Caco-2 (cell line): ENCODE measurements at regions of chr3 and their contacts with region 1.

Region 1: DNA sequence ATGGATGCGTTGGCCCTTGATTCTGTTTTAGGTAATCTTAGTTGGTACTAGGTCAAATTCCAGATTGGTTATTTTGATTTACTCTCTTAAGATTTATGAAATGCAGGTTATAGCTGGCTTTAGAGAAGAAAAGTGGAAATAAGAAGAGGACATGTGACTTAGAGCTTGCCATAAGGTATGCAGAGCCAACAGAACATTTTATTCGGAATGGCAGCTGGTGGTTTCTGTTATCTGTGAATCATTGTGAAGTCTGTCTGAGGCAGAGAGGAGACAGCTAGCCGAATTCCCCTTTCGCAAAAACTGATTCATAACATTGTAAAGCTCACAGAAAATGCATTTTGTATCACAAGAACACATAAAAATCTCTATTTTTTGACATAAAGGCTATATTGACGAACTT is 82.1 kb downstream of the FILIP1L start:
- DNase-seq: no peak
- H3K4me3 ChIP-seq: no peak overlapping the region
- H3K4me3 Mint-ChIP-seq: no peak overlapping the region
- H3K27ac Mint-ChIP-seq: no peak overlapping the region
- H3K4me1 ChIP-seq: peaks cover 94% of the 10 kb centered on the region
- H3K4me1 Mint-ChIP-seq: peaks cover 34% of the 10 kb centered on the region
- H3K27me3 ChIP-seq: no peaks in the 10 kb centered on the region
- H3K27me3 Mint-ChIP-seq: no peaks in the 10 kb centered on the region
- CTCF ChIP-seq: no peak

Region 2: DNA sequence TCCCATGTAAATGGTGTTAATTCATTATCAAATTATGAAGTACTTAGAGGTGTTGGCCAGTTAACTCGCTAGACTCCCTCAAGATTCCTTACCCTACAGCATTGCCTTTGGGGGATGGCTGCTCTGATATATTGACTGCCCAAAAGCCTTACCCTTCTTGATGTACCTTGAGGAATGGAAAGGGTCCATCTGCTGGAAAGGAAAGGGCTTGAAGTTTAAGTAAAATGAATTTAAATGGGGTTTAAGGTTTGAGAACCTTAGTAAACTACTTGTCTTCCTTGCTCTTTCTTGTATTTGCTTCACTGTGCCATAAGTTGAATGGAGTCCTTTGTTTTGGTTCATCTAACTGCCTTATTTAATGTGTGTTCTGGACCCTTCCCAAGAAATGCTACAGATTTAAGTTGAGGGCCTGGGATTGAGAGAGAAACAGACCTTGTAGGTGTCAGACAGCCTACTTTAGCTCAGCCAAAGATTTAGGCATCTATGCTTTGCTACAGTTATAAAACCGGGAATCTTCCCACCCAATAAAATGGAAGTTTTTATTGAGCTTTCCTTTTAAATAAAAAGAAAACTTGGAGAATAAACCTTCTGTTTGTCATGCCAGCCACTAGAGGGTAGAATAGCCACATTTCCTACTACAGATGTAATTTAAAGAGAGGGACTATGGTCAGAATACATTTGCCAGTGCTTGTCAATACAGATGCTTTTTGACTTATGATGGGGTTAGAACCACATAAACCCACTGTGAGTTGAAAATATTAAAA is 189.2 kb before region 1 on chr3:
- CTCF ChIA-PET with region 1: no interaction called
- POLR2A ChIA-PET with region 1: no interaction called
- intact Hi-C with region 1: loop called (anchors 1 kb)
- DNase-seq: peak in 1 of 2 experiments; percentile 33
- H3K4me3 ChIP-seq: no peak overlapping the region
- H3K4me3 Mint-ChIP-seq: no peak overlapping the region
- H3K27ac Mint-ChIP-seq: no peak overlapping the region
- H3K4me1 ChIP-seq: peaks cover 12% of the 10 kb centered on the region; the same call in 1 of the 2 replicates
- H3K4me1 Mint-ChIP-seq: peaks cover 6% of the 10 kb centered on the region
- H3K27me3 ChIP-seq: no peaks in the 10 kb centered on the region
- H3K27me3 Mint-ChIP-seq: no peaks in the 10 kb centered on the region
- CTCF ChIP-seq: peak; percentile 63 to 67

Region 3: DNA sequence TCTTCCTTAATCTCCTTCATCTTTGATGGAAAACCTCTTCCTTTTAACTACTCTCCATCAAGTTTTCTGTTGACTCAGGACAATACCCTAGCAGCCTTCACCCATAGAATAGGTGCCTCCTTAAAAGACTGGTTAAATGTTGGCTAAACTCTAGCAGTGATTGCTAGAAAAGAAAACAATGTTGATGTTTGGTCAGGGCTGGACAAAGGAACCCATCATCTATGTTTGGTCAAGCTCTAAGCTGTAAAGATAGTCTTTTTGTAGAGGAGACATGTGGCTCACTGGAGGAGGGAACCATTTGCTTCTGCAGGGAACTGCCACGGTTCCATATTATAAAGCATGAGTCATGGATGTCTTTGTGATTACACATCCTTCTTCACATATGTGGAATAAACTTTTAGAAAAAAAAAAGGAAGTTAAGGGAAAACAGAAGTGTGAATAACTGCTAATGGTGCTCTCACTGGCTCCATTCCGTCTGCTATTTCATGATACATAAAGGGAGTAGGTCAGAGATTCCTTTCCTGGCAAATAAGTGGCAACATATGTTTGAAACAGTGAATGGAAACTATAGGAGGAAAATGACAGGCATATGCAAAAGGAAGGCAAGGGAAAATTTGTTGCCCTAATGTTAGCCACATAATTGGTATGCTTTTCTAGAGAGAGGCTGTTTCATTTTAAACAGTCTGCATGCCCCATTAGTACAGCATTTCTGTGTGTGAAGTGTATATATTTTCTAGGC is 136.4 kb before region 1 on chr3:
- CTCF ChIA-PET with region 1: no interaction called
- POLR2A ChIA-PET with region 1: no interaction called
- intact Hi-C with region 1: loop called (anchors 1 kb)
- DNase-seq: peak; percentile 52 to 66
- H3K4me3 ChIP-seq: no peak overlapping the region
- H3K4me3 Mint-ChIP-seq: peak overlapping the region; percentile 42
- H3K27ac Mint-ChIP-seq: peak overlapping the region; percentile 89
- H3K4me1 ChIP-seq: peaks cover 38% of the 10 kb centered on the region
- H3K4me1 Mint-ChIP-seq: peaks cover 20% of the 10 kb centered on the region
- H3K27me3 ChIP-seq: no peaks in the 10 kb centered on the region
- H3K27me3 Mint-ChIP-seq: no peaks in the 10 kb centered on the region
- CTCF ChIP-seq: no peak

Region 4: GRCh38 chr3:99965077-99965476 is 67.2 kb before region 1 on chr3:
- CTCF ChIA-PET with region 1: no interaction called
- POLR2A ChIA-PET with region 1: no interaction called
- intact Hi-C with region 1: loop called (anchors 5 kb)
- DNase-seq: no peak
- H3K4me3 ChIP-seq: no peak overlapping the region
- H3K4me3 Mint-ChIP-seq: no peak overlapping the region
- H3K27ac Mint-ChIP-seq: peak overlapping the region; percentile 24
- H3K4me1 ChIP-seq: peaks cover 23% of the 10 kb centered on the region
- H3K4me1 Mint-ChIP-seq: peaks cover 49% of the 10 kb centered on the region
- H3K27me3 ChIP-seq: no peaks in the 10 kb centered on the region
- H3K27me3 Mint-ChIP-seq: no peaks in the 10 kb centered on the region
- CTCF ChIP-seq: no peak

Region 5: DNA sequence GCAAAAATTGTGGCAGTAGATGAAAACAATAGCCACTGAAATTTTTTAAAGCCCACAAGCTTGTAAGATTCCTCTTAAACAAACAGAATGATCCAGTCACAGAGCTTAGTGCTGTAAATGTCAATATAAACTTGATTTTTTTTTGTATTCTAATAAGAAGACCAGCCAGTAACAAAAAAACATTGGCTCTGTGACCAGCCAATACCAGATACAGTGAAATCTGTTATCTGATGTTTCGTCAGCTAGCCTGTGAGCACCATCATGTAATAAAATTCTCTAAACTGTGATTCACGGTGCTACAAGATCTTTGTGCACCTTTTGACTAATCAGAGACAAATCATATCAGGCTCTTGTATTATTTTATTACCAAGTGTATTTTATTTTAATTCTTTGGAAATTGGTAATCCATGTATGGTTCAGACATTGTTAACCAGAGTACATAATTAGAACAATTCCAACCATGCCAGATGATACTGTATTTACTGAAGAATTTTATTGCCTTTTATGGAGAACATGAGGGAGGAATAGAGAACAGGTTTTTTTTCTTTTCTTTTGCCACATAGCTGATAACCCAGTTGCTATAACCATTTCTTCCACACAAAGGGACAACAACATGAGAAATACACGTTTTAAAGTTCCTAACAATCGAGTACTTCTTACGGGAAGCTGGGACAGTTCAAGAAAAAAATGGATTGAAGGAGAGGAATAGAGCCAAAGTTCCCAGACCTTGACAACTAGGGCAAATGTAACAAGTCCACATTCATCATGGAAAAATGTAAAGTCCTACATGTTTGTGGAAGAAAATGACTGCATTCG is 10.1 kb after region 1 on chr3:
- CTCF ChIA-PET with region 1: interaction called, 3 read pairs
- POLR2A ChIA-PET with region 1: no interaction called
- intact Hi-C with region 1: loop called (anchors 1 kb)
- DNase-seq: peak in 1 of 2 experiments; percentile 23
- H3K4me3 ChIP-seq: no peak overlapping the region
- H3K4me3 Mint-ChIP-seq: no peak overlapping the region
- H3K27ac Mint-ChIP-seq: peak overlapping the region; percentile 87
- H3K4me1 ChIP-seq: peaks cover 78% of the 10 kb centered on the region
- H3K4me1 Mint-ChIP-seq: peaks cover 47% of the 10 kb centered on the region
- H3K27me3 ChIP-seq: no peaks in the 10 kb centered on the region
- H3K27me3 Mint-ChIP-seq: no peaks in the 10 kb centered on the region
- CTCF ChIP-seq: no peak

Region 6: GRCh38 chr3:100053951-100054620 is 21.8 kb after region 1 on chr3:
- CTCF ChIA-PET with region 1: interaction called, 3 read pairs
- POLR2A ChIA-PET with region 1: no interaction called
- intact Hi-C with region 1: loop called (anchors 1 kb)
- DNase-seq: peak; percentile 70 to 73
- H3K4me3 ChIP-seq: no peak overlapping the region
- H3K4me3 Mint-ChIP-seq: peak overlapping the region; percentile 48
- H3K27ac Mint-ChIP-seq: peak overlapping the region; percentile 83
- H3K4me1 ChIP-seq: peaks cover 56% of the 10 kb centered on the region
- H3K4me1 Mint-ChIP-seq: peaks cover 51% of the 10 kb centered on the region
- H3K27me3 ChIP-seq: no peaks in the 10 kb centered on the region
- H3K27me3 Mint-ChIP-seq: no peaks in the 10 kb centered on the region
- CTCF ChIP-seq: no peak

Region 7: GRCh38 chr3:100068826-100069225 is 36.6 kb after region 1 on chr3:
- CTCF ChIA-PET with region 1: no interaction called
- POLR2A ChIA-PET with region 1: no interaction called
- intact Hi-C with region 1: no loop called
- DNase-seq: peak; percentile 70 to 80
- H3K4me3 ChIP-seq: no peak overlapping the region
- H3K4me3 Mint-ChIP-seq: no peak overlapping the region
- H3K27ac Mint-ChIP-seq: no peak overlapping the region
- H3K4me1 ChIP-seq: peaks cover 21% of the 10 kb centered on the region
- H3K4me1 Mint-ChIP-seq: peaks cover 6% of the 10 kb centered on the region
- H3K27me3 ChIP-seq: no peaks in the 10 kb centered on the region
- H3K27me3 Mint-ChIP-seq: no peaks in the 10 kb centered on the region
- CTCF ChIP-seq: peak; percentile 50 to 63

Region 8: GRCh38 chr3:100081986-100082692 is 49.9 kb after region 1 on chr3:
- CTCF ChIA-PET with region 1: no interaction called
- POLR2A ChIA-PET with region 1: interaction called, 4 read pairs
- intact Hi-C with region 1: loop called (anchors 1 kb)
- DNase-seq: no peak
- H3K4me3 ChIP-seq: no peak overlapping the region
- H3K4me3 Mint-ChIP-seq: no peak overlapping the region
- H3K27ac Mint-ChIP-seq: no peak overlapping the region
- H3K4me1 ChIP-seq: peaks cover 59% of the 10 kb centered on the region
- H3K4me1 Mint-ChIP-seq: peaks cover 40% of the 10 kb centered on the region
- H3K27me3 ChIP-seq: no peaks in the 10 kb centered on the region
- H3K27me3 Mint-ChIP-seq: no peaks in the 10 kb centered on the region
- CTCF ChIP-seq: no peak

Region 9: GRCh38 chr3:100106531-100107141 is 74.4 kb after region 1 on chr3:
- CTCF ChIA-PET with region 1: no interaction called
- POLR2A ChIA-PET with region 1: no interaction called
- intact Hi-C with region 1: no loop called
- DNase-seq: no peak
- H3K4me3 ChIP-seq: no peak overlapping the region
- H3K4me3 Mint-ChIP-seq: no peak overlapping the region
- H3K27ac Mint-ChIP-seq: no peak overlapping the region
- H3K4me1 ChIP-seq: 0 out of 2 replicates have a peak, but pooled peaks cover 15% of the 10 kb centered on the region
- H3K4me1 Mint-ChIP-seq: peaks cover 20% of the 10 kb centered on the region
- H3K27me3 ChIP-seq: no peaks in the 10 kb centered on the region
- H3K27me3 Mint-ChIP-seq: no peaks in the 10 kb centered on the region
- CTCF ChIP-seq: no peak